Lower leg skin (tissue), 4 donors: ENCODE measurements at regions of chr1 and their contacts with region 1.

Region 1: DNA sequence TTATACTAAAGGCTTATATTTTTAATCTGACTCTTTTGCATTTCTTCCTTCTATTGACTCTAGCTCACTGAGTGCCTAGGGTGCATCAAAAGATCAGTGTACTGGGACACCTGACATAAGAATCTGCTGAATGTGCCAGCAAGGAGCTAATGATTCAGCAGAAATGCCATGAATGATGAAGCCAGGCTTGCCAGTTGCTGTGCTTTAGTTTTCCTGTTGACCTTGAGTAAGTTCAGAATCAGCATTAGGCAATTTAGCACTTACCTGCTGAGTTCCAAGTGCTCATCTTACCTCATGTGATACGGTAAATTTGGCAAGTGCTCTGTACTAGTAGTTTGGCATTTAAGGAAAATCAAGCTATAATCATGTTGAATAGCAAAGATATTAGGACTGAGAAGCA is 523.2 kb upstream of the B3GALT2 start:
- DNase-seq: no peak
- H3K4me3 ChIP-seq: no peak overlapping the region
- CTCF ChIP-seq: no peak
- POLR2A ChIP-seq: no peak

Region 2: GRCh38 chr1:193283016-193283415 is 426.6 kb before region 1 on chr1:
- intact Hi-C with region 1: no loop called
- DNase-seq: no peak
- H3K4me3 ChIP-seq: no peak overlapping the region
- CTCF ChIP-seq: no peak
- POLR2A ChIP-seq: no peak

Region 3: GRCh38 chr1:193685986-193686385 is 23.6 kb before region 1 on chr1:
- intact Hi-C with region 1: loop called (anchors 1 kb)
- DNase-seq: no peak
- H3K4me3 ChIP-seq: no peak overlapping the region
- CTCF ChIP-seq: no peak
- POLR2A ChIP-seq: no peak